Right ventricle myocardium superior (tissue), 1 donor: ENCODE measurements at regions of chr1 and their contacts with region 1.

Region 1: GRCh38 chr1:246566128-246566812 is at the starts of genes CNST and TFB2M:
- DNase-seq: peak; percentile 99
- ATAC-seq: peak; percentile 98
- total RNA-seq, gene CNST: 21.0 TPM
- total RNA-seq, gene TFB2M: 18.6 TPM

Region 2: DNA sequence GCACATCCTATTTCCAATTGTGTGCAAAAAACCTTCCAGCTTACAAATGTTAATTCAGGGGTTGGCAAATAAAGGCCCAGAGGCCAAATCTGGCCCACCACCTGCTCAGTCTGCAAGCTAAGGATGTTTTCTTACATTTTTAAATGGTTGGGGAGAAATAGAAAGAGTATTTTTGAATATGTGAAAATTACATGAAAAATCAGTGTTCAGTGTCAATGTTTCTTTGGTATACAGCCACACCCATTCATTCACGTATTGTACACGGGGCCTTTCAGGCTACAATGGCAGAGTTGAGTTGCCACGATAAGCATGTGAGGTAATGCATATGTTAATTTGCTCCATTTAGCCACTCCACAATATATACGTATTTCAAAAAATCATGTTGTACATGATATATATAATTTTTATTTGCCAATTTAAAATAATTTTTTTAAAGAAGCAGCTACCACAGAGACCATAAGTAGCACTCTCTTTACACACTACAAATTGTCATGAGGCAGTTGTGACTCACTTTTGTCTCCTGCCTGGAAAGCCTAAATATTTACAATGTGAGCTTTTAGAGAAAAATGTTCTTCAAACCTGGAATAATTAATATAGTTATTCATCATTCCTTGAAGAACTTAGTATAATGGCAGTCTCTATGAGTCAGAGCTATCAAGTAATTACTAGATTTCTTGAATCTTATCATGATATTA is 248.8 kb before region 1 on chr1:
- intact Hi-C with region 1: no loop called
- DNase-seq: no peak
- ATAC-seq: no peak

Region 3: GRCh38 chr1:246699095-246699735 is 132.9 kb after region 1 on chr1:
- intact Hi-C with region 1: loop called (anchors 5 kb)
- DNase-seq: peak; percentile 88
- ATAC-seq: peak; percentile 94